Breast epithelium (tissue), 4 donors: ENCODE measurements at regions of chrX and their contacts with region 1.

Region 1: DNA sequence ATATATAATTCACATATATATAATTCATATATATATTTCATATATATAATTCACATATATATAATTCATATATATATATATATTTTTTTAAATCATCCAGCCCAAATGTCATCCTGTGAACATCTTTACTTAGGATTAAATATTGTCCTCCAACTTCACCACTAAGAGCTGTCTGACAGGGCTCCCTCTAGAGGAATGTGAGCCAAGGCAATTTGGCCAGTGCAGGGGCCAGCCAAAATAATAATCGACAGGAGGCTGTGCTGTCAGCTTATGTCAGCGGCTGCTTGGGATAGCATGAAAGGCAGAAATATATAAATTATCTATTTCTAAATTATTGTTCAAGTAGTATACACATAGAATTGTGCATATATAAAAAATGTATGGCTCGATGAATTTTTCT is 29.5 kb downstream of the EGFL6 start:
- DNase-seq: no peak
- H3K4me3 ChIP-seq: no peak overlapping the region
- H3K27ac ChIP-seq: no peak overlapping the region
- H3K4me1 ChIP-seq: no peaks in the 10 kb centered on the region
- H3K27me3 ChIP-seq: peaks cover 0 to 62% of the 10 kb centered on the region in 2 donors
- CTCF ChIP-seq: no peak
- POLR2A ChIP-seq: no peak

Region 2: DNA sequence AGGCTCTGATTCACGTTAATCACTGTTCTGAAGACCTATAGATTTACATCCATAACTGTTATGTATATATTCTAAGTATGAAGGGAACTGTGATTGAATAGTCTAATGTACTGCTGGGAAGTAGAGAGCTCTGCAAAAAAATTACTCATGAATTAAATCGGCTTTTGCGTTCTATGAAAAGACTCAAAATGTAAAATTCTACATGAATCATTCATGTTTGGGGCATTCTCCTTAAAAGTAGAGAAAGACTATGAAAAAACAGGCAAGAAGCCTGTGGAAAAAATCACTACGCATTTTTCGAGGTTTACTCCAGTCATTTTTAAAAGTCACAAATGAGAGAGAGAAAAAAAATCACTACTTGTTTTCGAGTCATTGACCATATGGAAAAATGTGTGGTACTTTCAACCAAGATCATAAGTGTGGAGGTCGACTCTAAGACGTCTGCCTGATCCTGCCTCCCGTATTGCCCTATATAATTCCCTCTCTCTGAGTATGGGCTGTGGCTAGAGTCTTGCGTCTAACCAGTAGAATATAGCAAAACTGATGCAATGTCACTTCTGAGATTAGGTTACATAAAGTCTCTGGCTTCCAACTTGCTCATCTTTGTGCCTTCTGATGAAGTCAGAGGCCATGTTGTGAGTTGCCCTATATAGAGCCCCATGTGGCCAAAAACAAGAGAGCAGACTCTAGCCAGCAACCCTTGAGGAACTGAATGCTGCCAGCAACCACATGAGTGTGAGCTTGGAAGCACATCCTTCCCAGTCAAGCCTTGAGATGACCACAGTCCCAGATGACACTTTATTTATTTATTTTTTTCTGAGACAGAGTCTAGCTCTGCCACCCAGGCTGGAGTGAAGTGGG is 1817.5 kb after region 1 on chrX:
- intact Hi-C with region 1: loop called (anchors 5 kb)
- DNase-seq: no peak
- H3K4me3 ChIP-seq: no peak overlapping the region
- H3K27ac ChIP-seq: no peak overlapping the region
- H3K4me1 ChIP-seq: no peaks in the 10 kb centered on the region
- H3K27me3 ChIP-seq: peaks cover 0 to 23% of the 10 kb centered on the region in 2 donors
- CTCF ChIP-seq: no peak
- POLR2A ChIP-seq: no peak